Activated CD4-positive, alpha-beta memory T cell treated with anti-CD3 and anti-CD28 coated beads for 36 hours (primary cell): ENCODE measurements at regions of chr7 and their contacts with region 1.

Region 1: GRCh38 chr7:152383341-152384234 is 52.2 kb downstream of the KMT2C start:
- DNase-seq: peak; percentile 31
- H3K4me3 Mint-ChIP-seq: no peak overlapping the region
- H3K27ac Mint-ChIP-seq: no peak overlapping the region
- H3K4me1 Mint-ChIP-seq: peaks cover 31% of the 10 kb centered on the region
- H3K27me3 Mint-ChIP-seq: no peaks in the 10 kb centered on the region

Region 2: GRCh38 chr7:152363798-152364197 is 19.8 kb before region 1 on chr7:
- CTCF ChIA-PET with region 1: no interaction called
- POLR2A ChIA-PET with region 1: no interaction called
- intact Hi-C with region 1: no loop called
- DNase-seq: no peak
- H3K4me3 Mint-ChIP-seq: no peak overlapping the region
- H3K27ac Mint-ChIP-seq: no peak overlapping the region
- H3K4me1 Mint-ChIP-seq: peaks cover 46% of the 10 kb centered on the region
- H3K27me3 Mint-ChIP-seq: no peaks in the 10 kb centered on the region

Region 3: DNA sequence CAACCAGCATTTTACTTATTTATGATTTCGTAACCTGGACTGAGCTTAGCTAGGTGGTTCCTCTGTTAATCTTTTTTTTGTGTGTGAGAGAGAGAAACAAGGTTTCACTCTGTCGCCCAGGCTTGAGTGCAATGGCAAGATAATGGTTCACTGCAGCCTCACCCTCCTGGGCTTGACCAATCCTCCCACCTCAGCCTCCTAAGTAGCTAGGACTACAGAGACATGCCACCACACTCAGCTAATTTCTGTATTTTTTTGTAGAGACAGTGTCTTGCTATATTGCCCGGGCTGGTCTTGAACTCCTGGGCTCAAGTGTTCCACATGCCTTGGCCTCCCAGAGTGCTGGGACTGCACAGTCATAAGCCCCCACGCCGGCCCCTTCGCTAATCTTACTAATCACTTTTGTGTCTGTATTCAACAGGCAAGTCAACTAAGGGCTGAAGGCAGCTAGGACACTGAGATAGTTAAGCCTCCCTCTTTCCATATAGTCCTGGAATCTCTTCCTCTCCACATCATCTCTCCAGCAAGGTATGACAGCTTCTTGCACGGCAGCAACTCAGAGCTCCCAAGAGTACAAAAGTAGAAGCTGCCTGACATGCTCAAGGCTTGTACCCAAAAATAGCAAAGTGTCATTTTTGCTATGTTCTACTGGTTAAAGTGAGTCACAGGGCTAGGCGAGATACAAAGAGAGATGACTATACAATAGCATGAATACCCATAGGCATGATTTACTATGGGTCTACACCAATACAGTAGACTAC is 40.9 kb after region 1 on chr7:
- CTCF ChIA-PET with region 1: no interaction called
- POLR2A ChIA-PET with region 1: no interaction called
- intact Hi-C with region 1: loop called (anchors 5 kb)
- DNase-seq: peak; percentile 37
- H3K4me3 Mint-ChIP-seq: no peak overlapping the region
- H3K27ac Mint-ChIP-seq: peak overlapping the region; percentile 76
- H3K4me1 Mint-ChIP-seq: peaks cover 67% of the 10 kb centered on the region
- H3K27me3 Mint-ChIP-seq: no peaks in the 10 kb centered on the region